A549 (cell line): ENCODE measurements at regions of chr7 and their contacts with region 1.

Region 1: DNA sequence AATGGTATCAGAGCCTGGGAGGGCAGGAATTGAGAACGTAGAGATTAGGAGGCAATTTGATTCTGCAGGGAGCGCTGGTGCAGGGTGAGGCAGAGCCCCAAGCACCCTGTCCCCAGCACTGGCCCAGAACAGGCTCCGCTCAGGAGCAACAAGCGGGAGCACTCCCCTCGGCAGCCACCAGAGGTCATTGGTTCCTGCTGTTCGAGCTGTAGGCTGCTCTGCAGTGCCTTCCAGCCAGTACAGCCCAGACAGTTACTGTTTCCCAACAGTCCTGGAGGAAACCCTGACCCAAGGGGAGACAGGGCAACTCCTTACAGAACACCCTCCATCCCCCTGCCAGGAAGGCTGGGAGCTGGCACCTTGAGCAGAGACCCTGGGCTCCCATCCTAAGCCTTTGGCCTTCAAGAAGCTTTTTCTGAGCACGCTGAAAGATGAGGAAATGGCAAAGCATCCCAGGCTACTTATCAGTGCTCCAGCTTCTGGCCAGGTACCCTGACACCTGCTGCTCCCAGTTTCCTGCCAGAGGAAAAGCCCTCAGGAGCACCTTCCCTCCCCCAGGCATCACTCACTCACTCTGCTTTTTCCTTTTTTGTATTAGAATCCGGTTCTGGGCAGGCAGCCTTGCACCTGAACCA is 71.2 kb upstream of the EFCAB10 start:
- DNase-seq: peak; percentile 71 to 90
- ATAC-seq: peak; percentile 92 to 95
- H3K4me3 ChIP-seq: no peak overlapping the region
- H3K27ac ChIP-seq: peak overlapping the region in 1 of 2 experiments; percentile 39; a peak in 1 of 6 replicates
- H3K4me1 ChIP-seq: peaks cover 41% of the 10 kb centered on the region
- CTCF ChIP-seq: peak; percentile 73
- EP300 ChIP-seq: no peak
- POLR2A ChIP-seq: no peak
- RAD21 ChIP-seq: peak; percentile 80 to 87

Region 2: GRCh38 chr7:105480931-105481330 is 171.5 kb before region 1 on chr7:
- CTCF ChIA-PET with region 1: no interaction called
- POLR2A ChIA-PET with region 1: no interaction called
- DNase-seq: no peak
- ATAC-seq: no peak
- H3K4me3 ChIP-seq: no peak overlapping the region
- H3K27ac ChIP-seq: no peak overlapping the region
- H3K4me1 ChIP-seq: no peaks in the 10 kb centered on the region
- CTCF ChIP-seq: no peak
- EP300 ChIP-seq: no peak
- POLR2A ChIP-seq: no peak
- RAD21 ChIP-seq: no peak

Region 3: DNA sequence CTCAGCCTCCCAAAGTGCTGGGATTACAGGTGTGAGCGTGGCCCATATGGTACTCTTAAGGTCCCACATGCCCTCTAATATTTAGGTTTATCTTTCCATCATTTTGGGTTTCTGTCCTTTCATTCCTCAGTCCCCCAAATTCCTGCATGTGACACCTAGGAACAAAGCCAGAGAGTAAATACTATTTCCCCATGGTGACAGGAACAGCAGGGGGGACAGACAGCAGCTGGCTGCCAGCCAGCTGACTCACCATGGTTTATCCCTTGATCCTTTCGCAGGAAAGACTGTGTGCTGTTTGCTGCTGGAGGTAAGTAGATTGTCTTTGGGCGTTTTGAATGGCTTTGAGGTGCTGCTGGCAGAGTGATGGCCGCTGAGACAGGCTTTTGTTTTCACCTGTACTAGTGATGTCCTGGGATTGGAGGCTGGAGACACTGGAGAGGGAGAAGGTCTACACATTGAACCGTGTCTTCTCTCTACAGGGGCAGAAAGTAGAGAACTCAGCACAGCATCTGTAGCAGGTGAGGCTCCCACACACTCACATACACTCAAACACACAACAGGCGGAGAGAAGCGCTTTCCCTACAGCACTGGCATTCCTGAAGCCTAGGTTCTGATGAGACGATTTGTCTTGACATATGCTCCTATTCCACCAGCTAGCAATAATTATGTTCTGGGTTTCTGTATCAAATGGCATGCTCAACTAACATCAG is 12.5 kb after region 1 on chr7:
- CTCF ChIA-PET with region 1: interaction called, 31 read pairs
- POLR2A ChIA-PET with region 1: no interaction called
- DNase-seq: peak; percentile 55 to 62
- ATAC-seq: peak; percentile 76 to 81
- H3K4me3 ChIP-seq: no peak overlapping the region
- H3K27ac ChIP-seq: no peak overlapping the region
- H3K4me1 ChIP-seq: peaks cover 9% of the 10 kb centered on the region
- CTCF ChIP-seq: no peak
- EP300 ChIP-seq: no peak
- POLR2A ChIP-seq: no peak
- RAD21 ChIP-seq: no peak

Region 4: DNA sequence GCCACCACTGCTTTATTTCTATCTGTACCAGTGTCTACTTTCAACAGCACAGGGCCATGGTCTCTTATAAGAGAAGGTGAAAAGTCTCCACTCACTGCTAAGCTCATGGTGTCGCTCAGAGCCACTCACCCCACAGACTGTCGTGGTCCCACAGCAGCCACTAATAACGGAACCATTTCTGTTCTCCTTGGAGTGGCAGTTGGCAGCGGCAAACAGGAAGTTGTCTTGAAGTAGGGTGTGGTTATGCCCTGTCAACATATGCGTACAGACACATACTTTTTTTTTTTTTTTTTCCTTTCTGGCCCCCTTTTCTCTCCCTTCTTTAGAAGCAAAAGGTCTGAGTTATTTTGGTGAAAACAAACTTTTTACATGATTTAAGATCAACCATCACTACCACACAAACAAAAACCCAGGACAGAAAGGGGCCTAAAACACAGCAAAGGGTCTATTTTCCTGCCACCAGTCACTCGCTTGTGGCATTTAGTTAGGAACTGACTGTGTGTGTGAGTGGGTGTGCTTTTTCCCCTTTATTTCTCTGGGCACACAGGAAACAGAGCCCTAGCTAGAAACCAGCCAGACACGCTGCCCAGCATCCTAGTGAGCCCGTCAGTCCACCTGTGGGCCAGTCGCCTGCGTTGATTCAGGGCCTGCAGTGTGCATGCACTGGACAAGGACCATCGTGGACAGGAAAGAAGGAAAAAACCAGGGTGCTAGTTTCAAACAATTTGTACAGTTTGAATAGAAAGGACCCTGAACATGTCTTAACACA is 25.5 kb after region 1 on chr7:
- CTCF ChIA-PET with region 1: interaction called, 11 read pairs
- POLR2A ChIA-PET with region 1: no interaction called
- DNase-seq: no peak
- ATAC-seq: peak in 1 of 2 experiments; percentile 36; a peak in 1 of 6 replicates
- H3K4me3 ChIP-seq: no peak overlapping the region
- H3K27ac ChIP-seq: no peak overlapping the region
- H3K4me1 ChIP-seq: peaks cover 19% of the 10 kb centered on the region
- CTCF ChIP-seq: no peak
- EP300 ChIP-seq: no peak
- POLR2A ChIP-seq: no peak
- RAD21 ChIP-seq: no peak

Region 5: DNA sequence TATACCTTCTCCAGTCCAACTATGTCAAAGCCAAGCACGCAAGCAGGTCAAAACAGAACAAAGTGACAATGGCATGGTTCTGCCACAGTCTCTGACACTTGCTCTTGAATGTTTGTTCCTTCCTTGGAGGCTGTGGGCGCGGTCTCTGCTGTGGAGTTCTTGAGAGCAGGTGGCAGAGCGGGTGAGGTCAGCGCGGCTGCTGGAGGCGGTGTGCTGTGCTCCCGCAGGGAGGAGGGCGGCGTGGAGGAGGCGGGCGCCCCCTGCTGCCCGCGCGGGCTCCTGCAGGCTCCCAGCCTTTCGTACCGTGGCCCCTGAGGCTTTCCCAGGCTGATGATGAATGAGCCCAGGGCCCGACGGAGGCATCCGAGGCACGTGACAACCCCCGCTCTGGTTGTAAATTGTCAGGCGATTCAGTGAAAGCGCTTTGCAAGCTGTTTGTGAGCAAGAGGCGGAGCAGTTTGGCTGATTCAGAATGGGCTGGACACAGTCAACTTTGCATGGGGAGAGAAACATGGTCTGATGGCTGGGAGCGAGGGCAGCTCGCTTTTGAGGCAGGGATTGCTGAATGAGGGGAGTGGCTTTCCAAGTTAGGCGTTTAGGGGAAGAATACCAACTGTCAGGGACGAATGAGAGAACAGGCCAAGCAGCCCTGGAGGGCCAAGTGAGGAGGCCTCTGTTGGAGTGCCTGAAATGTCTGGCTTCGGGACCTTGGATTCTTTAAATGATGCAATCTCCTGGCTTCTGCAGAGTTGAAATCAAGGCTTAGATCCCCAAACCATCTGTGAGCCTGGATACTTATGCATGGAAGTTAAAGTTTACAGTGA is 357.1 kb after region 1 on chr7:
- CTCF ChIA-PET with region 1: interaction called, 13 read pairs
- POLR2A ChIA-PET with region 1: no interaction called
- DNase-seq: peak; percentile 76 to 85
- ATAC-seq: peak; percentile 97 to 99
- H3K4me3 ChIP-seq: no peak overlapping the region
- H3K27ac ChIP-seq: no peak overlapping the region
- H3K4me1 ChIP-seq: peaks cover 4% of the 10 kb centered on the region; the same call in 2 of the 3 replicates
- CTCF ChIP-seq: peak; percentile 96
- EP300 ChIP-seq: no peak
- POLR2A ChIP-seq: no peak
- RAD21 ChIP-seq: peak; percentile 80 to 92

Region 6: GRCh38 chr7:106050011-106050745 is 397.7 kb after region 1 on chr7:
- CTCF ChIA-PET with region 1: interaction called, 127 read pairs
- POLR2A ChIA-PET with region 1: no interaction called
- DNase-seq: peak in 1 of 2 experiments; percentile 32
- ATAC-seq: peak; percentile 36 to 78; a peak in 3 of 6 replicates
- H3K4me3 ChIP-seq: no peak overlapping the region
- H3K27ac ChIP-seq: no peak overlapping the region
- H3K4me1 ChIP-seq: no peaks in the 10 kb centered on the region
- CTCF ChIP-seq: peak; percentile 20; the same call in 1 of the 3 replicates
- EP300 ChIP-seq: no peak
- POLR2A ChIP-seq: no peak
- RAD21 ChIP-seq: peak; percentile 20 to 29; a peak in 2 of 5 replicates